BJ (cell line): ENCODE measurements at regions of chr12 and their contacts with region 1.

Region 1: DNA sequence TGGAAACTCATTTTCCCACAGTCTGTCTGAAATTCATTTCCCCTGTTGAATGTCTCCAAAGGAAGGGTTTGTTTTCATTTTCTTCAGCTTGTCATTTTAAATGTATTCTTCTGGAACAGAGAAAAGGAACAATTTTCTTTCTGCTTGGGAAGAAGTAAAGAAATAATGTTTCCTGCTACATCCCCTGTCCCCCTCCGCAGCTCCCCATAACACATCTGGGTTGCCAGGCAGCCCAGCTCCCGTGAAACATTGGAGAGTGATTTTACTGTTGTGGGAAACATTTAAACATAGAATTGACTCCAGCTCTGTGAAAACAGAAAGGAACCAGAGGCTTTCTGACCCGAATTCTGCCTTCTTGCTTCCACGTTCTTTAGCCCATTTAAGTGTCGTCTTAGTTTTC is 159.5 kb downstream of the TMEM132C start:
- DNase-seq: no peak
- H3K4me3 ChIP-seq: no peak overlapping the region
- H3K27me3 ChIP-seq: no peaks in the 10 kb centered on the region
- CTCF ChIP-seq: no peak

Region 2: GRCh38 chr12:128583480-128583879 is 157.0 kb after region 1 on chr12:
- CTCF ChIA-PET with region 1: no interaction called
- POLR2A ChIA-PET with region 1: no interaction called
- DNase-seq: no peak
- H3K4me3 ChIP-seq: no peak overlapping the region
- H3K27me3 ChIP-seq: no peaks in the 10 kb centered on the region
- CTCF ChIP-seq: no peak

Region 3: DNA sequence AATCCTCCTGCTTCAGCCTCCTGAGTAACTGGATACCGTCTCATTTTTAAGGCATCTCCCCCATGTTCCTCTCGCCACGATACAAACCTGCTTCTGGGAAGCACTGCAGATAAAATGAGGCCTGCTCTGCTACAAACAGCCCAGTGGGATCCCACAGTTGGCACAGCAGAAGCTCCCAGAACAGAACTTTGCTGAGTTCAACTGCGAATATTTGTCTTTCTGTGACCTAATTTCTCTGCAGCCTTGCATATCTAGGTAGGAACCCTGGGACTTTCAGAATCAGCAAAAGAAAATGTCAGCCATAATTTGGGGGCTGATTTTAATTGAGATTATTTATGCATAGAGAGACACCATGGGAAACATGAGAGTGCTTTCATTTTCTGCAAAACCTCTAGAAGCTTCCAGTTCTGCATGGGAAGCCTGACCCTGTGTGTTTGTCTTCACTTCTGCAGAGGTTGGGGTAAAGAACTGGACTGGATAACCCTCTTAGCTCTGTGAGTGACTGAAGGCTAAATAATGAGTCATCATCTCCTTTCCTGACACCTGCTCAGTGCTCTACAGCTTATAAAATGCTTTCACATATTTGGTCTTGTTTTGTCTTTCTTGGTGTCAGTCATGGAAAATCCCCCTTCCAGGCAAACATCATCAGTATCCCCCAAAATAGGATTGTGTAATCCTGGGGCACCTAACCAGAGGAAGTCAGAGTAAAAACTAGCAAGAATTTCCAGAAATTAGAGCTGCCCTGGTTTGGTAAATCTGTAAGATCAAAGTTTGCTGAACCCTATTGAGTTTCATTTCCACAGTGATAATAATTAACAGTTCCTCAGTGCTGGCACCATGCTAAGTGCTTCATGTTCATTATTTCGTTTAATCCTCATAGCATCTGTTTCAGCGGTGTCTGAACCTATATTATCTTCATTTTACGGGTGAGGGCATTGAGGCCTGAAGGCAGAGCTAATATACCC is 211.4 kb after region 1 on chr12:
- CTCF ChIA-PET with region 1: no interaction called
- POLR2A ChIA-PET with region 1: interaction called, 15 read pairs
- DNase-seq: no peak
- H3K4me3 ChIP-seq: no peak overlapping the region
- H3K27me3 ChIP-seq: no peaks in the 10 kb centered on the region
- CTCF ChIP-seq: no peak